Heart right ventricle (tissue), 16 donors: ENCODE measurements at regions of chr10 and their contacts with region 1.

Region 1: DNA sequence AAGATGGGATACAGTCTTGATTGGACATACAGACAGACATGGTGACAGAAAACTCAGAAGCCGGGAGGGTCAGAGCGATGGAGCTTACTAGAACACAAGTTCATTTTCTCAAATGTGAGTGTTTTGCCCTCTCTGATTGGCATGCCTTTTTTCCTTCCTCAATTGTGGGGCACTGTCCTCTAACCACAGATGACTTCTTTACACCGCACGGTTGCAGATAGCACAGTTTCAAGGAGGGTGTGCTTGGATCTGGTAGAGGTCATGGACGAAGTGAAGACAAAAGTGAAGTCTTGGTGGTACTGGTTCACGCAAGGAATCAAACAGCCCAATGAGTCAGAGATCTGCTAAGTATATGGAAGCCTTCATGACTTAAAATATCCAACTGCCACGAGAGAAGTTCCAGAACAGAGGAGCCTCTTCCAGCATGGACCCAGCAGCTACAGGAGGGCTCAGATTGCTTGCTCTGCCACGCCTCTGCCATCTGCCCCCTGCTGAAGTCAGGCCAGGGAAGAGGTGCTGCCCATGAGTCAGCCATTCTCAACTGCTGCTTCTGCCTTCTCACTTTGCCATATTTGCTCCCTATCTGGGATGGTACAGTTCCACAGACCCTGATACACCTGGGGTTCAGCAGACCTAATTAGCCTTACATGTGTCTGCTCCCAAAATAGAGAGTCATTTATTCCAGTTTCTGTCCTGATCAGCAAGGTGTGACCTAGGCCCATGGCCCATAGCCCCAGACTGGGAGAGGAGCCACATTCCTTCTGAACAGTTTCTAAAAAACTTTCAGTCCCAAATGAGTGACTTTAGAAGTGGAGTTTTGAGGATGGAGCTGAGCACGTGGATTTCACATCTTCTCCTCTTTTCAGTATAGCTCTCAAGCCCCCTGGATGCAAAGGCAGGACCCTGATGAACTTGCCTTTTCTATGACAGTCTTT is 413.8 kb downstream of the KCNMA1 start:
- DNase-seq: no peak
- ATAC-seq: no peak
- H3K4me3 ChIP-seq: no peak overlapping the region
- H3K27ac ChIP-seq: no peak overlapping the region
- H3K4me1 ChIP-seq: no peaks in the 10 kb centered on the region
- H3K27me3 ChIP-seq: peaks cover 0 to 33% (median 15%) of the 10 kb centered on the region in 7 donors
- CTCF ChIP-seq: no peak

Region 2: GRCh38 chr10:75845176-75845947 is 1378.4 kb before region 1 on chr10:
- intact Hi-C with region 1: loop called in 1 of 10 experiments (anchors 5 kb)
- DNase-seq: no peak
- ATAC-seq: peak in 1 of 8 donors; percentile 40
- H3K4me3 ChIP-seq: no peak overlapping the region
- H3K27ac ChIP-seq: no peak overlapping the region
- H3K4me1 ChIP-seq: peaks cover 0 to 19% (median 5%) of the 10 kb centered on the region in 9 donors
- H3K27me3 ChIP-seq: no peaks in the 10 kb centered on the region
- CTCF ChIP-seq: peak in 2 of 9 donors; percentile 10 to 16

Region 3: GRCh38 chr10:77165445-77166208 is 58.2 kb before region 1 on chr10:
- intact Hi-C with region 1: no loop called
- DNase-seq: peak in 1 of 2 donors; percentile 14
- ATAC-seq: peak in 7 of 8 donors; percentile 29 to 66 (median 56)
- H3K4me3 ChIP-seq: no peak overlapping the region
- H3K27ac ChIP-seq: no peak overlapping the region
- H3K4me1 ChIP-seq: peaks cover 0 to 19% (median 0%) of the 10 kb centered on the region in 9 donors
- H3K27me3 ChIP-seq: peaks cover 0 to 32% (median 19%) of the 10 kb centered on the region in 7 donors
- CTCF ChIP-seq: peak; percentile 47 to 80 (median 76)

Region 4: DNA sequence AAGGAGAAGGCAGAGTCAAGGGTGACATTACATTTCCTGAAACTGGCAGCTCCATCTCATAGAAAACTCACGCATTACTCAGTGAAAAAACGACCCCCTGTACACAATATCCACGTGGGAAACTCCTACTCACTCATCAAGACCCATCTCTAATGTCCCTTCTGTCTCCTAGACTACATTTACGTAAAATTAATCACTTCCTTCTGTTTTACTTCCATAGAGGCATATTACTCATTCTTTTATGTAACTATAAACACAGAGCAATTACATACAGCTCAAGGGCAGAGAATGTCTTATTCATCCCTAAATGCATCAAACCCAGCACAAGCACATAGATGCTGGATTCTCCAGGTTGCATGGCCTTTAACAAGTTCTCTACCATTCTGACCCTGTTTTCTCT is 132.1 kb after region 1 on chr10:
- intact Hi-C with region 1: no loop called
- DNase-seq: no peak
- ATAC-seq: no peak
- H3K4me3 ChIP-seq: no peak overlapping the region
- H3K27ac ChIP-seq: no peak overlapping the region
- H3K4me1 ChIP-seq: peaks cover 0 to 7% (median 0%) of the 10 kb centered on the region in 9 donors
- H3K27me3 ChIP-seq: peaks cover 0 to 8% (median 4%) of the 10 kb centered on the region in 7 donors
- CTCF ChIP-seq: no peak